ENCODE measurements at regions of chr18 and their contacts with region 1.

Region 1: DNA sequence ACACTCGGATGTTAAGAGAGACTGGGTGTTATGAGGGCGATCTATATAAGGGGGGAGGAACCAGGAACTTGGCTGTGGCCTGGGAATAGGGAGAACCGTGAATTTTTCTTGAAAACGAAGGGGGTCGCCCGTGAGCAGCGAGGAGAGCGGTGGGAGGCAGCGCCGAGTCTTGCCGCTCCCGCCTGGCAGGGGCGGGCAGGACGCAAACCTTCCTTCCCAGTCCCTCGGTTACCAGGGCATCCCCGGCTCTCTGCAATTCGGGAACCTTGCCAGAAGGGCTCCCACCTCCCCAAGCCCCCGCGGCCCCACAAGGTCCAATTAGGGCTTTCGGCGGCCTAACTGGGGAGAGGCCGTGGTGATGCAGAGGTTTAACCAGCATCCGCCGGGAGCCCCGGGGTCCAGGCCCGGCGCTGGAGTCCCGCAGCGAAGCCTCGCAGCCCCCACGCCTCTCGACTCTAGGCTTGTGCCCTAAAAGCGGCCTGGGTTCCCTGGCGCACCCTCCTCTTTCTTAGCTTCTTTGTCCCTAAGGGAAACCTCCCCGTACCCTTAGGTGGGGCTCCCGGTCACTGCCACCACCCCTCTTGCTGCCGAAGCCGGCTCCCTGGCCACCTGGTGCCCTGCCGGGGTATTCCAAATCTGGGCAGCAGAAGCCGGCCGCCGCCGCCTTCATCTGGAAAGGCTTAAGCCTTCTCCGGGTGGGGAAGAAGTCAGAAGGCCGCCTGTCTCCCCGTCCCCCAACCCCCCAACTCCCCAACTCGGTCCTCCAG is 680 bp upstream of the FHOD3 start:
- DNase-seq: peak; percentile 78 to 86 (median 84)
- H3K4me3 ChIP-seq: peak overlapping the region; percentile 47
- H3K27ac ChIP-seq: peak overlapping the region; percentile 51 to 71
- H3K4me1 ChIP-seq: no peaks in the 10 kb centered on the region
- H3K27me3 ChIP-seq: no peaks in the 10 kb centered on the region
- CTCF ChIP-seq: peak in 1 of 3 donors; percentile 41
- EP300 ChIP-seq: no peak
- POLR2A ChIP-seq: no peak

Region 2: DNA sequence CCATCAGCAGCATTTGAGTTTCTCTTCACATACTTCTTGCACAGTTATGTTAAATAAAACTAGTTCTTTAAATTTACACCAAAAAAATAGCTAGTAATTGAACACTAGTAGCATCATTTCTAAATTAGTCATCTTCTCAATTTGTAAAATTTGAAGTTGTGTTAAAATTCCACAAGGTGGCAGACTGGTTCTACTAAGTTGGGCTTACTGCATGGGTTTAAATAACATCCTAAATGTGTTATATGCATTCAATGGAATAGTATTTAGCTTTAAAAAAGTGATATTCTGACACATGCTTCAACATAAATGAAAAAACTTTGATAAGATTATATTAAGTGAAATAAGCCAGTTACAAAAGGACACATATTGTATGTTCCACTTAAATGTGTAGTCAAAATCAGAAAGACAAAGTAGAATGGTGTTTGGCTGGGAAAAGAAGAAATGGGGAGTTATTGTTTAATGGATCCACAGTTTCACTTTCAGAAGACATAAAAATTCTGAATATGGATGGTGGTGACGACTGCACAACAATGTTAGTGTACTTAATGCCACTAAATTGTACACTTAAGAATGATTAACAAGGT is 200.8 kb before region 1 on chr18:
- intact Hi-C with region 1: loop called in 1 of 4 experiments (anchors 10 kb)
- DNase-seq: no peak
- H3K4me3 ChIP-seq: no peak overlapping the region
- H3K27ac ChIP-seq: no peak overlapping the region
- H3K4me1 ChIP-seq: no peaks in the 10 kb centered on the region
- H3K27me3 ChIP-seq: no peaks in the 10 kb centered on the region
- CTCF ChIP-seq: peak; percentile 39 to 69 (median 49)
- EP300 ChIP-seq: no peak
- POLR2A ChIP-seq: no peak

Region 3: DNA sequence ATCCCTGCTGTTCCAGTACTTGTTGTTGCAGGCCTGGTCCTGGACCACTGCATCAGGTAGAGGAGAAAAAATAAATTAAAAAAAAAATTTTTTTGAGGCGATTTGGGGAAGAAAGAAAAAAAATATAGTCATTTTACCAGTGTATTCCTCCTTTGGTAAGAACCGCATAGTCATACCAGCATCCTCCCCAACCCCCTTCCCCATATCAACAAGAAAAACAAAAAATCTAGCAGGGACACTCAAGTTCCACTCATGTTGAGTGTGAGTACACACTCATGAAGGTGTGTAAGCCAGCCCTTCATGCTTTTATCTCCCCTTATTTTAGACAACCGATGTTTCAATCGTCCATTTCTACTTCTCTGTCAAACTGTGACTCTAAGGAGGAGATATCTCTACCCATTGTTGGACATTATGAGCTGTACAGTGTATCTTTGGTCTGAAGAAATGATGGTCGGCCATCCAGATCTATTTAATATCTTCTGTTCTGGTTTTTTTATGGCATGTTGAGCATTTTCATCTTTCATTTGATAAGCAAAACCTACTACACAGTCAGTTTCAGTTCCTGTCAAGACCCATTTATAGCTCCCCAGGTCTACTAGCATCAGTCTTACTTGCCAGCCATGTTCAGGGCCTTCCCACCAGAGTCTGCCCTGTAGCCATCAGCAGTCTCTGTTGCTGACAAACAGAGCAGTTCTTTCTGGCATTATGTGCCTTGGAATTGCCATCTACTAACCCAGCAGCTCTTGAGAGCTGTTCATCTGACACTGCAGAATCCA is 147.1 kb before region 1 on chr18:
- intact Hi-C with region 1: no loop called
- DNase-seq: no peak
- H3K4me3 ChIP-seq: no peak overlapping the region
- H3K27ac ChIP-seq: no peak overlapping the region
- H3K4me1 ChIP-seq: peaks cover 3% of the 10 kb centered on the region
- H3K27me3 ChIP-seq: no peaks in the 10 kb centered on the region
- CTCF ChIP-seq: no peak
- EP300 ChIP-seq: no peak
- POLR2A ChIP-seq: no peak

Region 4: GRCh38 chr18:36160959-36161371 is 135.9 kb before region 1 on chr18:
- intact Hi-C with region 1: no loop called
- DNase-seq: no peak
- H3K4me3 ChIP-seq: no peak overlapping the region
- H3K27ac ChIP-seq: no peak overlapping the region
- H3K4me1 ChIP-seq: peaks cover 2% of the 10 kb centered on the region
- H3K27me3 ChIP-seq: no peaks in the 10 kb centered on the region
- CTCF ChIP-seq: no peak
- EP300 ChIP-seq: no peak
- POLR2A ChIP-seq: no peak

Region 5: DNA sequence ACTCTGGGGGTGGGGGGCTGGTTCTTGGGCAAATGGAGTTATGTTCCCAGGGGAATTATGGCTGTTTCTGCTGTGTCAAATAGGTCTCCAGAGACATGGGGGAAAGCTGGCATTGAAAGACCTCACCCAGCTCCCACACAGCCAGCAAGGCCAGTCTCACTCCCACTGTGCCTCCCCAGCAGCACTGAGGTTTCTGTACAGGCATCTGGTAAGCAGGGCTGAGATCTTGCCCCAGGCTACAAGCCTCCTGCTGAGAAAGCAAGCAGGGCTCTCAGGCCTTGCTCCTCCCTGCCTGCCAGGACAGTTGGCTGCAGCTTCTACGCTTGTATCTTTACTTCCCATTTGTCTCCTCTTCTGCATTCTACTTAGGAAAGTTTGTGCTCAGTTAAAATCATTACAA is 49.8 kb before region 1 on chr18:
- intact Hi-C with region 1: no loop called
- DNase-seq: no peak
- H3K4me3 ChIP-seq: no peak overlapping the region
- H3K27ac ChIP-seq: no peak overlapping the region
- H3K4me1 ChIP-seq: no peaks in the 10 kb centered on the region
- H3K27me3 ChIP-seq: no peaks in the 10 kb centered on the region
- CTCF ChIP-seq: no peak
- EP300 ChIP-seq: no peak
- POLR2A ChIP-seq: no peak

Region 6: DNA sequence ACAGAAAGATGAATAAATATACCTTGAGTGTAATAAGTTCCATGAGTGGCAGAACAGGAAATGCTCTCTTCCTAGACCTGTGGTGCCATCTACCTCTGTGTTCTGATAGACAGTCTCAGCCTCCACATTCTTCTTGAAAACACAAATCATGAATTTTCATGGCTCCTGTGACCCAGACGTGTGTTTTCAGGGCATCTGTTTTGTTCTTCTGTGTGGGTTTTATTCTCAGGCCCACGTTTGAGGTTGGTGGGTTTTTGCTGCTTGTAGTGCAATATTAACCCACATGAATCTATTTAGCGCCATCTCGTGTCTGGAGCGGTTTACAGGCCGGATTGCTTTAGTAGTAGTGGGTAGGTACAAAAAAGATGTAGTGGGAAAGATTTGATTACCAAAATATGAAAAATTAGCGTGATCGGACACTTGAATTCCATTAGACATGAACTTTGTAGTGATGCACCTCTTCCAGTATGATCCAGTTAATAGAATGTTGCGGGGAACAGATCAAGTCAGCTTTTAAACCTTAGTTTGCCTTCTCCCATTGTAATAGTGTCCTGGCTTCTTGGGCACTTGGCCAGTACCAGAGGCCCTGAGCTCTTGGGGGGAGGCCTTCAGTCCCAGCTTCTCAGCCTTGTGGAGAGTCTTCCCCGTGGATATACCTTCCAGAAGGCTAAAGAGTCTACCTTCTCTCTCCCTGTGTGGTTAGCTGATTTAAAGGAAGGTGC is 275.5 kb after region 1 on chr18:
- intact Hi-C with region 1: loop called (anchors 2 to 5 kb)
- DNase-seq: peak; percentile 31 to 71 (median 60)
- H3K4me3 ChIP-seq: no peak overlapping the region
- H3K27ac ChIP-seq: no peak overlapping the region
- H3K4me1 ChIP-seq: peaks cover 5% of the 10 kb centered on the region
- H3K27me3 ChIP-seq: no peaks in the 10 kb centered on the region
- CTCF ChIP-seq: peak in 2 of 3 donors; percentile 27 to 38
- EP300 ChIP-seq: no peak
- POLR2A ChIP-seq: no peak

Region 7: DNA sequence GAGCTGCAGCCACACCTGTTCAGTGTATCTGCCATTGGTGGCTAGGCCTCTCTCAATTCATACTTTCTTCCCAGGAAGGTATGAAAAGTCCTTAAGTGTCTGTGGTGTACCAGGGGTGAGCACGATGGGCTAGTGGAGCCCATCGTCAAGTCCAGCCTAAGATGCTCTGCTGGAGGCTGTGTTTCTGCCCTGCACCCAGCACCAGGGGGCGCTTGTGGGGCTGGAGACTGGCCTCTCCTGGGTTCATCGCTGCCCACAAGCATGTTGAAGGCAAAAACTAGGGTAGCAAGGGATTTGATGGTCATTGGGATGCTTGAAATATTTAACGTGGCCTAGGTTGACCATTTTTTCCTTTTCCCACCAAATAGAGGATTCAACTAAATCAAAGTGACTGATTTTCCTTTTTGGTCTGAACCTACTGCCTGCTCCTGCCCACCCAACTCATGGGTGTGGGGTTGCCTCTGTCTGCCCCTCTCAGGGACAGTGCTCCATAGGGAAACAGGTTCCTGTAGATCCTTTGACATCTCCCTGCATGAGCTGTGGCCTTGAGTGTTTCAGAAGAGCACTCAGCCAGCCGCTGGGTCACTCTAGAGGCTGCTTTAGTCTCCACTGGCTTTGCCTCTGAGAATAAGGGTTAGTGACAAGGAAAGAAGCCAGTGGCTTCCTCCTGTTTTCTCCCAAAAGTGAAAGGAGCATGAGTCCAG is 472.9 kb after region 1 on chr18:
- intact Hi-C with region 1: loop called in 1 of 4 experiments (anchors 10 kb)
- DNase-seq: no peak
- H3K4me3 ChIP-seq: no peak overlapping the region
- H3K27ac ChIP-seq: no peak overlapping the region
- H3K4me1 ChIP-seq: no peaks in the 10 kb centered on the region
- H3K27me3 ChIP-seq: no peaks in the 10 kb centered on the region
- CTCF ChIP-seq: no peak
- EP300 ChIP-seq: no peak
- POLR2A ChIP-seq: no peak

Measured in ovary (tissue), 10 donors.